HepG2 (cell line): ENCODE measurements at regions of chr3 and their contacts with region 1.

Region 1: GRCh38 chr3:79086514-79086913 is 681.3 kb downstream of the ROBO1 start:
- DNase-seq: peak; percentile 53
- ATAC-seq: peak; percentile 84
- H3K4me3 ChIP-seq: no peak overlapping the region; a peak in 1 of 6 replicates
- H3K27ac ChIP-seq: no peak overlapping the region
- H3K4me1 ChIP-seq: peaks cover 2% of the 10 kb centered on the region; the same call in 1 of the 2 replicates
- H3K27me3 ChIP-seq: peaks cover 0 to 6% of the 10 kb centered on the region in 2 experiments; a peak in 1 of 5 replicates
- CTCF ChIP-seq: peak; percentile 71
- EP300 ChIP-seq: no peak
- POLR2A ChIP-seq: no peak
- RAD21 ChIP-seq: 0 out of 2 replicates have a peak, but pooled peaks have one; percentile 24

Region 2: GRCh38 chr3:78322780-78323179 is 763.7 kb before region 1 on chr3:
- CTCF ChIA-PET with region 1: no interaction called
- POLR2A ChIA-PET with region 1: no interaction called
- in situ Hi-C with region 1: no loop called
- intact Hi-C with region 1: no loop called
- DNase-seq: no peak
- ATAC-seq: no peak
- H3K4me3 ChIP-seq: no peak overlapping the region
- H3K27ac ChIP-seq: no peak overlapping the region
- H3K4me1 ChIP-seq: no peaks in the 10 kb centered on the region
- H3K27me3 ChIP-seq: 0 out of 5 replicates have a peak, but pooled peaks cover 0 to 2% of the 10 kb centered on the region in 2 experiments
- CTCF ChIP-seq: no peak
- EP300 ChIP-seq: no peak
- POLR2A ChIP-seq: no peak
- RAD21 ChIP-seq: no peak

Region 3: DNA sequence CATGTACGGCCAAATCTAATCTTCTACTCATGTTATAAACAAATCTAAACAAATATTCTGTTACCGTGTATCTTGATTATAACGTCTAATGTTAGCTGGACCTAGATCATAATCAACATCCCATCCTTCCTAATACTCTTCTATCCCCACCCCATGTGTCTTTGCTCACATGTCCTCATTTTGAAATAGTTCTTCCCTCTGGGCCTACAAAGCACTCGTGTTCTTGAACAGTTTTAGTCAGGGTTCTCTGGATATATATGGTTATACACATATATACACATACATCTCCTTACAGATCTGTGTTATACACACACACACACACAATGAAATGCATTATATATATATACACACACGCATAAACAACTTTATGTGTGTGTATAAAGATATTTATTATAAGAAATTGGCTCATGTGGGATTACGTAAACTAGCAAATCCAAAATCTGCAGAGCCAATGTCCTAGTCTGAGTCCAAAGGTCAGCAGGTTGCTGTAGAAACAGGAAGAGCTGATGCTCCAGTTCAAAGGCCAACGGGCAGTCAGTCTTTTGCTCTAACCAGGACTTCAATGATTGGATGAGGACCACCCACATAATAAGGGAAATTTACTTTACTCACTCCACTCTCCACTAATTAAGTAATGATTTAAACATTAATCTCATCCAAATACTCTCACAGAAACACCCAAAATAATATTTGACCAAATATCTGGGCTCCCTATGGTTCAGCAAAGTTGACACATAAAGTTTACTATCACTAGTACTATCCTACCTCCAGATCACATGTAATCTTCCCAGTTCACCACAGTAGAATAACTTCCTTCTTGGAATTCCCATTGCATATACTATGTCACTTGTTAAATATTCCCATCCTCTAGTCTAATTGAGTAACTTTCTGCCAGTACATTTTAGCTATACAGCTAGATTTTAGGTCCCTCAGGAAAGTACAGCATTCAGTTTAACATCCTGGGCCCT is 231.3 kb after region 1 on chr3:
- CTCF ChIA-PET with region 1: no interaction called
- POLR2A ChIA-PET with region 1: no interaction called
- in situ Hi-C with region 1: no loop called
- intact Hi-C with region 1: no loop called
- DNase-seq: peak; percentile 30
- ATAC-seq: peak; percentile 53; the same call in 2 of the 3 replicates
- H3K4me3 ChIP-seq: no peak overlapping the region
- H3K27ac ChIP-seq: no peak overlapping the region
- H3K4me1 ChIP-seq: 0 out of 2 replicates have a peak, but pooled peaks cover 8% of the 10 kb centered on the region
- H3K27me3 ChIP-seq: no peaks in the 10 kb centered on the region
- CTCF ChIP-seq: no peak
- EP300 ChIP-seq: no peak
- POLR2A ChIP-seq: no peak
- RAD21 ChIP-seq: no peak

Region 4: GRCh38 chr3:79497447-79498111 is 411.1 kb after region 1 on chr3:
- CTCF ChIA-PET with region 1: no interaction called
- POLR2A ChIA-PET with region 1: no interaction called
- in situ Hi-C with region 1: no loop called
- intact Hi-C with region 1: loop called (anchors 2 kb)
- DNase-seq: no peak
- ATAC-seq: no peak
- H3K4me3 ChIP-seq: no peak overlapping the region
- H3K27ac ChIP-seq: no peak overlapping the region
- H3K4me1 ChIP-seq: no peaks in the 10 kb centered on the region
- H3K27me3 ChIP-seq: no peaks in the 10 kb centered on the region
- CTCF ChIP-seq: peak; percentile 51
- EP300 ChIP-seq: no peak
- POLR2A ChIP-seq: no peak
- RAD21 ChIP-seq: no peak